ENCODE measurements at regions of chr2 and their contacts with region 1.

Region 1: DNA sequence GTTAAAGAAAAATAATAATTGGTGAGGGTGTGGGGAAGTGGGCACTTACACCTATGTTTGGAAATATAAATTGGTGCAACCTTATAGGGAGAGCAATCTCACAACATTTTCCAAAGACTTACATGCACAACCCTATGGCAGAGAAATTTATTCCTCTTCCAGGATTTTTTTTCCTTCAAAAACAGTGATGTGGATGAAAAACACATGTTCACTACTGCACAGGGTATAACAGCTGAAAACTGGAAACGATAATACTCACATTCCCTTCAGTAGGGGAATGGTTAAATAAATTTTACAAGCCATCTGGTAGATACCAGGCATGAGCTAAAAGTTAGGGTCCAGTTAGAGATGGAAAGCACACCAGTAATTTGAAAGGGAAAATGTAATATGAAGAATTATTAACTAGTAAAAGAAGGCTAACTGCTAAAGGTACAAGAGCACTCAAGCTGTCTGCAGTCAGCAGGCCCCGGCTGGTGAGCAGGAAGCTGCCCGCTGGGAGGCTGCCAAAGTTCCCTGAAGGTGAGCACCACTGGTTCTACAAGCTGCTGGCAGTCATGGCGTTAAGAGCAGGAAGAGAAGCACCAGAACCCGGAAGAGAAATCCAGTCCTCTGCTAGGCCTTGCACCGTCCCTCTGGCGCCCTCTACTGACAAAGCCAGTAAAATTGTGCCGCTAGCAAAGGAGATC is 28.4 kb upstream of the CASP8 start:
- DNase-seq: peak; percentile 93
- H3K4me3 ChIP-seq: no peak overlapping the region
- H3K27ac ChIP-seq: peak overlapping the region; percentile 22
- H3K4me1 ChIP-seq: peaks cover 10% of the 10 kb centered on the region
- H3K27me3 ChIP-seq: no peaks in the 10 kb centered on the region
- CTCF ChIP-seq: peak; percentile 89 to 92
- POLR2A ChIP-seq: peak; percentile 51

Region 2: DNA sequence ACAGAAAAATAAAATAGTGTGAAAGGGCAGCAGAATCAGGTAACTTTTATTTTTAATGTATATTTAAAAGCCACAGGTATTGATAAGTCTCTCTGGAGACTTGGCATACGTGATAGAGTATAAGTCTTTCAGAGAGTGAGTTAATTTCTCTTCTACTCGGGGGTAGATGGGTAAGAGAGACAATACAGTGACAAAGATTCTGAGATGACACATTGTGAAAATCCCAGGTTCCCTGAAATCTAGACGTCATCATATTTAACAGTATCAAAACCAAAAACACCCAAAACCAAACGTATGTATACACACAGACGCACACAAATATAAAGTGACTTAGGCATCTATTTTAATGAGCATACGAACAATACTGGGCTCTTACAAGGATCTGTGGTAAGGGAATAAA is 309.5 kb before region 1 on chr2:
- CTCF ChIA-PET with region 1: no interaction called
- POLR2A ChIA-PET with region 1: no interaction called
- dilution Hi-C with region 1: no loop called
- intact Hi-C with region 1: no loop called
- DNase-seq: no peak
- H3K4me3 ChIP-seq: no peak overlapping the region
- H3K27ac ChIP-seq: no peak overlapping the region
- H3K4me1 ChIP-seq: no peaks in the 10 kb centered on the region
- H3K27me3 ChIP-seq: no peaks in the 10 kb centered on the region
- CTCF ChIP-seq: no peak
- POLR2A ChIP-seq: no peak

Region 3: GRCh38 chr2:201118121-201118960 is 113.6 kb before region 1 on chr2:
- CTCF ChIA-PET with region 1: interaction called, 7 read pairs
- POLR2A ChIA-PET with region 1: interaction called, 3 read pairs
- dilution Hi-C with region 1: no loop called
- intact Hi-C with region 1: loop called (anchors 2 kb)
- DNase-seq: peak; percentile 90
- H3K4me3 ChIP-seq: peak overlapping the region; percentile 77 to 99 (median 77)
- H3K27ac ChIP-seq: peak overlapping the region; percentile 88
- H3K4me1 ChIP-seq: peaks cover 60% of the 10 kb centered on the region
- H3K27me3 ChIP-seq: no peaks in the 10 kb centered on the region
- CTCF ChIP-seq: peak; percentile 20 to 66
- POLR2A ChIP-seq: peak; percentile 67

Region 4: DNA sequence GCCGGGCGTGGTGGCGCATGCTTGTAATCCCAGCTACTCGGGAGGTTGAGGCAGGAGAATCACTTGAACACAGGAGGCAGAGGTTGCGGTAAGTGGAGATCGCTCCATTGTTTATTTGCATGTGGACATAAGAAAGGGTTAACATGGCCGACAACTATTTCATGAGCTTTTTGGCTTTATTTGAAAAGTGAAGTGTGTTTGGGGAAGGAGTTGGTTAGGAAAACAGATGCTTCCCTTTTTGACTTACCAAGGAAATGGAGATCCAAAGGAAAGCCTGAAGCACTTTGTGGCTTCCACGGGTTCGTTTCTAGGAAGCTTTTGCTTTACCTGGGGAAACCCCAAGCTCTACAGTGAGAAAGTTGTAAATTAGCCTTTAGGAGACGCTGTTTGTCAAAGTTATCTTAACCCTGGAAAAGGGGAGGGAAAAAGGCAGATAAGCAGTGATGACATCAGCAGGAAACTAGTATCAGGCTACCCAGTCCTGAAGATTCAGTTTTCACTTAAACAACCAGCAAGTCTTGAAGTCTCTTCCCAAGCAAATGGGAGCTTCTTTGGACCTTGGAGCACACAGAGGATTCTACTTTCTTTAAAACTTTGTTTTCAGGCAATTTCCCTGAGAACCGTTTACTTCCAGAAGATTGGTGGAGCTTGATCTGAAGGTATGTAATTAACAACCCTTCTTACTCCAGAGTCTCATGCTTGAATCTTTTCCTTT is 49.1 kb before region 1 on chr2 and contains the start of gene CASP10:
- CTCF ChIA-PET with region 1: interaction called, 331 read pairs
- POLR2A ChIA-PET with region 1: interaction called, 13 read pairs
- dilution Hi-C with region 1: no loop called
- intact Hi-C with region 1: loop called (anchors 1 kb)
- DNase-seq: peak; percentile 95
- H3K4me3 ChIP-seq: peak within 1 kb of the TSS; percentile 59 to 96 (median 85)
- H3K27ac ChIP-seq: peak within 1 kb of the TSS; percentile 77
- H3K4me1 ChIP-seq: peaks cover 18% of the 10 kb centered on the region
- H3K27me3 ChIP-seq: no peaks in the 10 kb centered on the region
- CTCF ChIP-seq: peak; percentile 51 to 65
- POLR2A ChIP-seq: peak; percentile 91
- total RNA-seq, gene CASP10: 31.1 and 37.6 TPM in 2 replicates

Region 5: DNA sequence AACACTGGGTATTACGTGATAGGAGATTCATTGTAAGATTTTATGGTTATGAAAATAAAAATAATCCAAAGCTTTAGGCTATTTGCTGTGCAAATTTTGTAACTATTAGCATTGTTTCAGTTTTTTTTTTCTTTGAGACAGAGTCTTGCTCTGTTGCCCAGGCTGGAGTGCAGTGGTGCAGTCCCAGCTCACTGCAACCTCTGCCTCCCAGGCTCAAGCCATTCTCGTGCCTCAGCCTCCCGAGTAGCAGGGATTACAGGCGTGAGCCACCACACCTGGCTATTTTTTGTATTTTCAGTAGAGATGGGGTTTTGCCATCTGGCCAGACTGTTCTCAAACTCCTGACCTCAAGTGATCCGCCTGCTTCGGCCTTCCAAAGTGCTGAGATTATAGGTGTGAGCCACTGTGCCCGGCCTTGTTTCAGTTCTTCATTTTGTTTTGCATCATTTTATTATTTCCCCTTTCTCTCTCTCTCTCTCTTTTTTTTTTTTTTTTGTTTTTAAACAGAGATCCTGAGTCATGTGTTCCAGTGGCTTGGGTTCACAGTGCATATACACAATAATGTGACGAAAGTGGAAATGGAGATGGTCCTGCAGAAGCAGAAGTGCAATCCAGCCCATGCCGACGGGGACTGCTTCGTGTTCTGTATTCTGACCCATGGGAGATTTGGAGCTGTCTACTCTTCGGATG is 23.2 kb before region 1 on chr2:
- CTCF ChIA-PET with region 1: interaction called, 14 read pairs
- POLR2A ChIA-PET with region 1: no interaction called
- dilution Hi-C with region 1: no loop called
- intact Hi-C with region 1: no loop called
- DNase-seq: no peak
- H3K4me3 ChIP-seq: no peak overlapping the region
- H3K27ac ChIP-seq: no peak overlapping the region
- H3K4me1 ChIP-seq: peaks cover 7% of the 10 kb centered on the region
- H3K27me3 ChIP-seq: no peaks in the 10 kb centered on the region
- CTCF ChIP-seq: no peak
- POLR2A ChIP-seq: no peak

Region 6: DNA sequence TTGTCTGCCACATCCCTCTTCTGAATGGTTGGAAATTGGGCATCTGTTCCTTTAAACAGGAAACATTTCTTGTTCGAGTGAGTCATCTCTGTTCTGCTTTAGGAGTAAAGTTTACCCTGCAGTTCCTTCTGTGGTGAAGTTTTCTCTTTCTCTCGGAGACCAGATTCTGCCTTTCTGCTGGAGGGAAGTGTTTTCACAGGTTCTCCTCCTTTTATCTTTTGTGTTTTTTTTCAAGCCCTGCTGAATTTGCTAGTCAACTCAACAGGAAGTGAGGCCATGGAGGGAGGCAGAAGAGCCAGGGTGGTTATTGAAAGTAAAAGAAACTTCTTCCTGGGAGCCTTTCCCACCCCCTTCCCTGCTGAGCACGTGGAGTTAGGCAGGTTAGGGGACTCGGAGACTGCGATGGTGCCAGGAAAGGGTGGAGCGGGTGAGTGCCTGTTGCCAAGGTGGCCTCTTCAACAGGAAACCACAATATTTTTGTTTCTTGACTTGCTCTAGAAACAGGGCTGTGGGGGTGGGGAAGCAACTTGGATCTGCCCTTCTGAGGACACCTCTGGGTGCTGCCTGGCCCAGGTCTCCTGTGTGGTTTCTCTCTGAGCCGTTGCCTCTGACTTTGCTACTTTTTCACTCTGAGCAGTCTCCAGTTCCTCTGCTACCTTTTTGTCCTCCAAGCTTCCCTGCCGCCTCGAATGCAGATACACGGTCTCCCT is 26.2 kb after region 1 on chr2:
- CTCF ChIA-PET with region 1: interaction called, 4 read pairs
- POLR2A ChIA-PET with region 1: no interaction called
- dilution Hi-C with region 1: no loop called
- intact Hi-C with region 1: loop called (anchors 1 kb)
- DNase-seq: peak; percentile 84
- H3K4me3 ChIP-seq: peak overlapping the region; percentile 43 to 80 (median 78)
- H3K27ac ChIP-seq: peak overlapping the region; percentile 98
- H3K4me1 ChIP-seq: peaks cover 30% of the 10 kb centered on the region
- H3K27me3 ChIP-seq: no peaks in the 10 kb centered on the region
- CTCF ChIP-seq: no peak
- POLR2A ChIP-seq: peak; percentile 31

Region 7: GRCh38 chr2:201451292-201452057 is 219.6 kb after region 1 on chr2 and contains the starts of genes STRADB and TRAK2:
- CTCF ChIA-PET with region 1: interaction called, 13 read pairs
- POLR2A ChIA-PET with region 1: no interaction called
- dilution Hi-C with region 1: no loop called
- intact Hi-C with region 1: loop called (anchors 1 kb)
- DNase-seq: peak; percentile 95
- H3K4me3 ChIP-seq: peak within 1 kb of the TSS; percentile 86 to 91 (median 90)
- H3K27ac ChIP-seq: peak within 1 kb of the TSS; percentile 62
- H3K4me1 ChIP-seq: peaks cover 7% of the 10 kb centered on the region
- H3K27me3 ChIP-seq: no peaks in the 10 kb centered on the region
- CTCF ChIP-seq: peak in 1 of 2 donors; percentile 47
- POLR2A ChIP-seq: peak; percentile 85
- total RNA-seq, gene STRADB: 16.6 and 16.8 TPM in 2 replicates
- total RNA-seq, gene TRAK2: 35.7 and 38.5 TPM in 2 replicates

Region 8: GRCh38 chr2:202178342-202178958 is 946.5 kb after region 1 on chr2:
- CTCF ChIA-PET with region 1: interaction called, 4 read pairs
- POLR2A ChIA-PET with region 1: no interaction called
- dilution Hi-C with region 1: no loop called
- intact Hi-C with region 1: loop called (anchors 2 kb)
- DNase-seq: peak; percentile 70
- H3K4me3 ChIP-seq: no peak overlapping the region
- H3K27ac ChIP-seq: no peak overlapping the region
- H3K4me1 ChIP-seq: no peaks in the 10 kb centered on the region
- H3K27me3 ChIP-seq: no peaks in the 10 kb centered on the region
- CTCF ChIP-seq: peak; percentile 67 to 79
- POLR2A ChIP-seq: no peak

Measured in endothelial cell of umbilical vein (primary cell).